ENCODE measurements at regions of chrX and their contacts with region 1.

Region 1: GRCh38 chrX:19372170-19372546 is 28.4 kb downstream of the PDHA1 start:
- DNase-seq: peak; percentile 59
- ATAC-seq: peak; percentile 79
- H3K4me3 ChIP-seq: peak overlapping the region; percentile 42
- H3K27ac ChIP-seq: no peak overlapping the region
- H3K4me1 ChIP-seq: peaks cover 3% of the 10 kb centered on the region
- H3K27me3 ChIP-seq: peaks cover 6% of the 10 kb centered on the region; the same call in 1 of the 2 replicates
- CTCF ChIP-seq: peak; percentile 79
- POLR2A ChIP-seq: no peak
- RAD21 ChIP-seq: peak; percentile 80

Region 2: DNA sequence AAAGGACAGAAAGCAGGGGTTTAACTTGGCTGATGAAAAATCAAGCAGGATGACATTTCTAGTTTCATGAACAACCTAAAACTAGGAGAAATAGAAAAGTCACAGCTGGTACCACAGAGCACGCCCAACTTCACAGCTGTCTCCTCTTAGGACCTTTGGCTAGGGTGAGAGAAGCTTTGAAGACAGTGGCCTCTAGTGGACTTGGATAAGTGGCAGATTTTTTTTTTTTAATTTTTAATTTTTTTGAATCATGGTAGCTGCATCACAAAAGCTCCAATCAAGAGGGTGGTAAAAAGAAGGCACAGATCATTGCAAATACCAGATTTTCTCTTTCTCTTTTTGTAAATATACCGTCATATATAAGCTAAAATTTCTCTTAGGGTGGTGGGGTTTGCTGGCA is 163.3 kb after region 1 on chrX:
- CTCF ChIA-PET with region 1: interaction called, 10 read pairs
- POLR2A ChIA-PET with region 1: no interaction called
- dilution Hi-C with region 1: no loop called
- in situ Hi-C with region 1: no loop called
- intact Hi-C with region 1: loop called (anchors 1 kb)
- DNase-seq: peak; percentile 24
- ATAC-seq: peak; percentile 68
- H3K4me3 ChIP-seq: no peak overlapping the region
- H3K27ac ChIP-seq: no peak overlapping the region
- H3K4me1 ChIP-seq: no peaks in the 10 kb centered on the region
- H3K27me3 ChIP-seq: no peaks in the 10 kb centered on the region
- CTCF ChIP-seq: peak; percentile 45
- POLR2A ChIP-seq: no peak
- RAD21 ChIP-seq: peak; percentile 47; the same call in 1 of the 2 replicates

Region 3: DNA sequence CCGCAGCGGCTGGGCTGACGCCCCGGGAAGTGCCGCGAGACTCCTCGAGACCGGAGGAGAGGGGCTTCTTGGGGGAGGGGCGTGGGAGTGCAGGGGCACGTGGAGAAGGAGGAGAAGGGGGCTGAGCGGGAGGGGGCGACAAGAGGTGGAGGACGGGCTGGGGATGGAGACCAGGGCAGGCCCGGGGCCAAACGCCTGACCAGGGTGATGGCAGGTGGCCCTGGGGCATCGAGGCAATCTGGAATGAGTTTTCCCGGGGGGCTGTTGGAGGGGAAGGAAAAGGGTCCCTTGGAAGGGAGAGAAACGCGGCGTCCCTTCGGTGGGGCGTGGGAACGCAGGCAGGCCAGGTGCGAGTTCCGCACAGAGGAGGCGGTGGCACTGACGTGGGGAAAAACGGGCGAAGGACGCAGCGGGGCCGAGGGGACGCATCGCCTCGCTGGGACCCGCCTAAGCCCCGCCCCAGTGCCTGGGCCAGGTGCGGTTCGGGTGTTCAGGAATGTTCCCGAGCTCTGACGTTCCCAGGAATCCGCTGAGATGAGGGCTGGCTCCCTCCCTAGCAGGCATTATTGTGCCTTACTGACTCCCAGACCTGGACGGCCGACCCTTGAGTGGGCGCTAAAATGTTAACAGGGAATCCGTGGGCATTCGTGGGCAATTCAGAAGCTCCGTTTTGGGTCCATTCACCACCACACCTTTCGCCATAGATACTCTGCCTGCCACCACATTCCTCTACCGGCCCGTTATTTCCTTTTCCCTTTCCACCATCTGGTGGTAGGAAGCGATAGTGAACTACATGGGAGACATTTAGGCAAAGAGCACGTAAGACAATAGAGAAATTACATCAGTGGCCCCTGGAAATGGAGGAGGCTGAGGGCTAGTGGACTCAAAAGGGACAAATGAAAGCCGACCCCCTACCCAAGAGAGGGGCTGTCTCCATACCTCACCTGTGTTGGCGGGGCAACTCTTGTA is 516.0 kb after region 1 on chrX:
- CTCF ChIA-PET with region 1: no interaction called
- POLR2A ChIA-PET with region 1: no interaction called
- dilution Hi-C with region 1: no loop called
- in situ Hi-C with region 1: loop called (anchors 10 kb)
- intact Hi-C with region 1: loop called (anchors 2 kb)
- DNase-seq: peak; percentile 77
- ATAC-seq: peak; percentile 60
- H3K4me3 ChIP-seq: peak overlapping the region; percentile 56
- H3K27ac ChIP-seq: peak overlapping the region; percentile 46
- H3K4me1 ChIP-seq: 0 out of 2 replicates have a peak, but pooled peaks cover 2% of the 10 kb centered on the region
- H3K27me3 ChIP-seq: no peaks in the 10 kb centered on the region
- CTCF ChIP-seq: peak; percentile 70
- POLR2A ChIP-seq: no peak
- RAD21 ChIP-seq: peak; percentile 76

Region 4: DNA sequence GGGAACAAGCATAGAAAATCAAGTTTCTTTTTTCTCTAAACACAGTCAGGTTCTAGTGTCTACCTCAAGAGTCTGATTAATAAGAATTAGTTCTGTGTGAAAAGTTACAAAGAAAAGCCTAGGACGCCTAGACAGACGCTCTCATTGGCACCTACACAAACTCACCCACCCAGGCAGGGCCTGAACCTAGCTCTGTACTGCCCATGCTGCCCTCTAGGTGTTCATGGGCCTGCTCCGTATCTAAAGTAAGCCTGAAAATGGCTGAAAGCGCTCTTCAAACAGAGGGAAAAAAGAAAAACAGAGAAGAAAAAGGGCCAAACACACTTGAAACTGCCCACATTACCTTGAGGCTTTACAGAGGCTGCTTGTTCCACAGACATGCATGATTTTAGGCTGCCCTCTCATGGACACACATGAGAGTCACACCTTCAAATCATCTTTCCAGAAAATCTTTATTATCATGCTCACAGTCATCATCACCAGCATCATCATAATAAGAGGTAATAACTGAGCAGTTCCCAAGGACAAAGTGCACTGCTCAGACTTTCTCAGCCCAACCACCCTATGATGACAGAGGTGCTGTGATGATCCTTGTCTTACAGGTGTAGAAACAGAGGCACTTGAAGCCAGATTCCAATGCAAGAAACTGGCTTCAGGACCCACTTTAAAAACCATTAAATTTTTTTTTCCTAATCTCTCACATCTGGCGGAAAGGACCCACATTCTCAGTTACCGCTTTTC is 695.0 kb after region 1 on chrX:
- CTCF ChIA-PET with region 1: no interaction called
- POLR2A ChIA-PET with region 1: no interaction called
- dilution Hi-C with region 1: no loop called
- in situ Hi-C with region 1: loop called (anchors 25 kb)
- intact Hi-C with region 1: loop called (anchors 10 kb)
- DNase-seq: peak; percentile 70
- ATAC-seq: peak; percentile 85
- H3K4me3 ChIP-seq: no peak overlapping the region
- H3K27ac ChIP-seq: no peak overlapping the region
- H3K4me1 ChIP-seq: peaks cover 2% of the 10 kb centered on the region
- H3K27me3 ChIP-seq: peaks cover 6% of the 10 kb centered on the region
- CTCF ChIP-seq: peak; percentile 64
- POLR2A ChIP-seq: no peak
- RAD21 ChIP-seq: peak; percentile 75

Region 5: DNA sequence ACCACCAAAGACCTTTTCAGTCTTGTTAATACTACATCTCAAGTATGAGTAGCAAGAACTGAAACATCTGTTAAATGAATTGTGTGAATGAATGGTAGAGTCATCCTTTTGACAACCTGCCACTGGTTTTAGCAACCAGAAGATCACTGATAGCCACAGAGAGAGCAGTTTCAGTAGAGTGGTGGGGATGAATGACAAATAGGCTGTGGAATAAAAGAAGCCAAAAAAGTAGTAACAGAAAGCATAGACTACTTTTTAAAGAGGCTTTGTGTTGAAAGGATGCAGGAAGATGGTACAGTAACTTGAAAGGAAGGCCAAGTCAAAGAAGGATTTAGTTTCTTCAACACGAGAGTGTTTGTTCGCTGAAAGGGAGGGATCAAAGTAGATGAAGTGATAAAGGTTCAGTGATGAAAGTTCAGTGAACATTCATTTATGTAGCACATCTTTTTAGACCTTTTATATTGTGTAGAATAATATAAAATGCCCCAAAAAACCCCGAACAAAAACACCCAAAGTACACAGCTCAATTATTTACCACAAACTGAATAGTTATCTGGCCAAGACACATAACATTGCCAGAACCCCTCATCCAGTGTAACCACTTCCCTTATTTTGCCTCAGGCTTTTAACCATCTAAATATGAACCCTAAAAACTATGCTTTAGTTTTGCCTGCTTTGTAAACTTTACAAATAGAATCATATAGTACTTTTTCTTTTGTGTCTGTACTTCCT is 809.6 kb after region 1 on chrX:
- CTCF ChIA-PET with region 1: no interaction called
- POLR2A ChIA-PET with region 1: no interaction called
- dilution Hi-C with region 1: no loop called
- in situ Hi-C with region 1: no loop called
- intact Hi-C with region 1: no loop called
- DNase-seq: no peak
- ATAC-seq: no peak
- H3K4me3 ChIP-seq: no peak overlapping the region
- H3K27ac ChIP-seq: no peak overlapping the region
- H3K4me1 ChIP-seq: no peaks in the 10 kb centered on the region
- H3K27me3 ChIP-seq: no peaks in the 10 kb centered on the region
- CTCF ChIP-seq: no peak
- POLR2A ChIP-seq: no peak
- RAD21 ChIP-seq: no peak